Calu3 (cell line): ENCODE measurements at regions of chr2 and their contacts with region 1.

Region 1: DNA sequence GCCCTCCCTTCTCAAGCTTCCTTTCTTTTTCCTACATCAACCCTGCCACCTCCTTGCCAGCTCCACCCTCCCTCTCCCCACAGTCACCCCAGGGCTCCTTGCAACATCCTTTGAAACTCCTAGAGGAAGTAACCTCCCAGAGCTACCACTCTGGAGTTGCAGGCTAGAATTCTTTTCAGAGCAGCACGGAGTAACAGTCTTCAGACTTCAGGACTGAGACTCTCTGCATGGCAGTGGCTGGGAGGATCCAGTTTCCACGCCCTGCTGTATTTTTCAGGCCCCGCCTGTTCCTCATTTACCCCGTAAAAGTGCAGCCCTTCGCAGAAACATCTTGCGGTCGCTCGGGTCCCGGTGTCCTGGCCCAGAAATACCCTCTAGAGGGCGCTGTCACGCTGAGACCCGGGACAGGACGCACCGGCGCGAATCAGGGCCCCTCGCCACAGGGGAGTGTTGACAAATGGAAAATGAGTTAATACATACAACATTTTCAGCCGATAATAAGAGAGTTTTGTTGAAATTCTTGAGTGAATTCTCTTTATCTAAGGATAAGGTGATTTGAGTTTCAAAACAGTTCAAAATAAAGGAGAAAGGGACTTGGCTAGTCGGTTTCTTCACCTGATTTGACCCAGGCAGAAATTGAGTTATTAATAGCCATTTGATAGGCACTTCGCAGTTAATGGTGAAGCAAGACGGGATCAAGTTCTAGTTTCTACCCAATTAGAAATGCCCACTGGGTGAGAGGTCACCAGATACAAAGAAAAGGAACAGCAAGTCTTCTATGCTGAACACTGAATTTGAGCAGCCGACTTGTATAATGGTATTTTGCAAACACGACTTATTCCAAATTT is 18.5 kb upstream of the NTSR2 start:
- DNase-seq: peak; percentile 81
- H3K4me3 Mint-ChIP-seq: peak overlapping the region; percentile 41
- H3K27ac Mint-ChIP-seq: no peak overlapping the region
- H3K4me1 Mint-ChIP-seq: peaks cover 11% of the 10 kb centered on the region
- H3K27me3 Mint-ChIP-seq: peaks cover 45% of the 10 kb centered on the region
- CTCF ChIP-seq: peak; percentile 86

Region 2: GRCh38 chr2:11753886-11754699 is 65.6 kb after region 1 on chr2:
- CTCF ChIA-PET with region 1: interaction called, 12 read pairs
- intact Hi-C with region 1: loop called (anchors 5 kb)
- DNase-seq: peak; percentile 47
- H3K4me3 Mint-ChIP-seq: peak overlapping the region; percentile 49
- H3K27ac Mint-ChIP-seq: peak overlapping the region; percentile 89
- H3K4me1 Mint-ChIP-seq: peaks cover 54% of the 10 kb centered on the region
- H3K27me3 Mint-ChIP-seq: no peaks in the 10 kb centered on the region
- CTCF ChIP-seq: no peak

Region 3: GRCh38 chr2:11778923-11779757 is 90.7 kb after region 1 on chr2:
- CTCF ChIA-PET with region 1: interaction called, 10 read pairs
- intact Hi-C with region 1: loop called (anchors 1 kb)
- DNase-seq: peak; percentile 88
- H3K4me3 Mint-ChIP-seq: no peak overlapping the region
- H3K27ac Mint-ChIP-seq: no peak overlapping the region
- H3K4me1 Mint-ChIP-seq: peaks cover 21% of the 10 kb centered on the region
- H3K27me3 Mint-ChIP-seq: no peaks in the 10 kb centered on the region
- CTCF ChIP-seq: peak; percentile 95